ENCODE measurements at regions of chr11 and their contacts with region 1.

Region 1: DNA sequence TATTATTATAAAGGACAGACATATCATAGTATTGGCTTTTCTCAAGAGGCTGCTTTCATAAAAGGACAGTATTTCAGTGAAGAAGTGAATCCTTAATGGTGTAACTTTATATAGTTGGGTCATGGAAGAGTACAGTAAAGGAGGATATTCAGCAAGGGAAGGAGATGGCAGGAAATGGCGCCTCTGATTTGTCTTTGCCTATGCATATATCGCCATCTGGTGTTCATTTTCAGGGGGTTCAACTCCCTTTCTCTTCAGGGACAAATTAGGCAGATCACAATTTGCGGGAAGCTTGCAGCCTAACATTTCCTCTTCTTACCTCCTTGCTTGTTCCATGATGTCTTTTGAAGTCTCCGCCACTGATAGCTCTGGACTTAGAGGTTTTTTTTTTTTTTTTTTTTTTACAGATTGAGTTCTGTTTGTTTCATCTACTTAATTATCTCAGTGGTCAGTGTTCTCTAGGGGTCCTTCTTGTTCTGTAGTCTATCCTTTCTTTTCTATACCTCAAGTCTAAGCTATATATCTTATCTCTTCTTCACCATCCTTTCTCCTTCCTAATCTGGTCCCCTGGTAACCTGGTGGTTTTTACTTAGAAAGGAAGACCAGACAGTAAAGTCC is 21.8 kb upstream of the RRM1 start:
- DNase-seq: peak; percentile 63 to 76
- H3K4me3 ChIP-seq: no peak overlapping the region
- H3K4me3 Mint-ChIP-seq: no peak overlapping the region
- H3K27ac Mint-ChIP-seq: no peak overlapping the region
- H3K4me1 ChIP-seq: no peaks in the 10 kb centered on the region
- H3K4me1 Mint-ChIP-seq: no peaks in the 10 kb centered on the region
- H3K27me3 ChIP-seq: no peaks in the 10 kb centered on the region
- H3K27me3 Mint-ChIP-seq: no peaks in the 10 kb centered on the region
- CTCF ChIP-seq: peak; percentile 69 to 92

Region 2: GRCh38 chr11:3841426-3842350 is 231.1 kb before region 1 on chr11:
- CTCF ChIA-PET with region 1: interaction called, 29 read pairs
- POLR2A ChIA-PET with region 1: interaction called, 4 read pairs
- intact Hi-C with region 1: loop called (anchors 1 kb)
- DNase-seq: peak; percentile 88 to 94
- H3K4me3 ChIP-seq: peak overlapping the region; percentile 68
- H3K4me3 Mint-ChIP-seq: peak overlapping the region; percentile 96
- H3K27ac Mint-ChIP-seq: peak overlapping the region; percentile 84
- H3K4me1 ChIP-seq: peaks cover 9% of the 10 kb centered on the region; the same call in 1 of the 2 replicates
- H3K4me1 Mint-ChIP-seq: peaks cover 10% of the 10 kb centered on the region
- H3K27me3 ChIP-seq: no peaks in the 10 kb centered on the region
- H3K27me3 Mint-ChIP-seq: no peaks in the 10 kb centered on the region
- CTCF ChIP-seq: peak; percentile 77 to 95

Region 3: GRCh38 chr11:3849297-3849874 is 223.4 kb before region 1 on chr11:
- CTCF ChIA-PET with region 1: interaction called, 81 read pairs
- POLR2A ChIA-PET with region 1: no interaction called
- intact Hi-C with region 1: loop called (anchors 1 kb)
- DNase-seq: peak in 1 of 2 experiments; percentile 70
- H3K4me3 ChIP-seq: no peak overlapping the region
- H3K4me3 Mint-ChIP-seq: no peak overlapping the region
- H3K27ac Mint-ChIP-seq: no peak overlapping the region
- H3K4me1 ChIP-seq: peaks cover 7% of the 10 kb centered on the region
- H3K4me1 Mint-ChIP-seq: peaks cover 19% of the 10 kb centered on the region
- H3K27me3 ChIP-seq: no peaks in the 10 kb centered on the region
- H3K27me3 Mint-ChIP-seq: no peaks in the 10 kb centered on the region
- CTCF ChIP-seq: peak; percentile 67 to 74

Region 4: GRCh38 chr11:3920148-3920852 is 152.5 kb before region 1 on chr11:
- CTCF ChIA-PET with region 1: no interaction called
- POLR2A ChIA-PET with region 1: no interaction called
- intact Hi-C with region 1: loop called (anchors 10 kb)
- DNase-seq: no peak
- H3K4me3 ChIP-seq: no peak overlapping the region
- H3K4me3 Mint-ChIP-seq: no peak overlapping the region
- H3K27ac Mint-ChIP-seq: no peak overlapping the region
- H3K4me1 ChIP-seq: no peaks in the 10 kb centered on the region
- H3K4me1 Mint-ChIP-seq: no peaks in the 10 kb centered on the region
- H3K27me3 ChIP-seq: no peaks in the 10 kb centered on the region
- H3K27me3 Mint-ChIP-seq: no peaks in the 10 kb centered on the region
- CTCF ChIP-seq: no peak

Region 5: GRCh38 chr11:3927133-3927796 is 145.5 kb before region 1 on chr11:
- CTCF ChIA-PET with region 1: interaction called, 15 read pairs
- POLR2A ChIA-PET with region 1: no interaction called
- intact Hi-C with region 1: loop called (anchors 10 kb)
- DNase-seq: no peak
- H3K4me3 ChIP-seq: no peak overlapping the region
- H3K4me3 Mint-ChIP-seq: no peak overlapping the region
- H3K27ac Mint-ChIP-seq: no peak overlapping the region
- H3K4me1 ChIP-seq: peaks cover 7% of the 10 kb centered on the region; the same call in 1 of the 2 replicates
- H3K4me1 Mint-ChIP-seq: peaks cover 6% of the 10 kb centered on the region
- H3K27me3 ChIP-seq: no peaks in the 10 kb centered on the region
- H3K27me3 Mint-ChIP-seq: no peaks in the 10 kb centered on the region
- CTCF ChIP-seq: no peak

Region 6: DNA sequence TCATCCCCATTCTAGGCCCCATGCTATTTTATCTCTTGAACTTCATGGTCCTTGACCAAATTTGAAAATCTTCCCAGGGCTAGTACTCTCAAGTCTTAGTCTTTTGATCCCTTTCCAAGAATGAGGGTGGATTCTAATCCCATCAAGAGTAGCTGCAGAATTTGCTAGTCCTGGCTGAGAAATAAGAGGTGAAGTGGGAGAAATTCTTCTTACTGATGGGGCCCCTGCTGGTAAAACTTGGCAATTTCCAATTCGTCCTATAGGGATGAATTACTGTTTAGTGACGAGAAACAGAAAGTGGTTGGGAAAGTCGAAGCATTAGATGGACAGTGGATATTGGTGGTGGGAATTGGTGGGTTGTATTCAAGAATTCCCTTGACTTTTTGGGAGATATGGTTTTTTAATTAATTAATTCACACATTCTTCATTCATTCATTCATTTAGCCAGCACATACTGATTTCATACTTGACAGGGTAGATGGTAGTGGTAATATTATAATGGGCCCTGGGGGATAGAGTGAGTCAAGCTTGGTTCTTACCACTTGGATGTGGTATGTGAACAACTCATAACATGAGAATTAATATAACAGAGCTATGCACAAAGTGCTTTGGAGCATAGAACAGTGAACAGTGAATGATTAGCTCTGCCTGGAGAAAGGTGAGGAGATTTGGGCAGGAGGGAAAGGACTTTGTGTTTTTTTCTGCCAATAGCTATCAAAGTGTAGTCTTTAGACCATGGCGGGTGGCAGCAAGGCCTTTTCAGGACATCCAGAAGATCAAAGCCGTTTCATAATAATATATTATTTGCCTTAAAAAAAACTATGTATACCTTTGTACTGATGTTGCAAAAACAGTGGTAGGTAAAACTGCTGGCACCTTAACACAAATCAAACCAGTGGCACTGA is 113.5 kb before region 1 on chr11:
- CTCF ChIA-PET with region 1: interaction called, 3 read pairs
- POLR2A ChIA-PET with region 1: no interaction called
- intact Hi-C with region 1: loop called (anchors 10 kb)
- DNase-seq: peak in 1 of 2 experiments; percentile 40
- H3K4me3 ChIP-seq: no peak overlapping the region
- H3K4me3 Mint-ChIP-seq: no peak overlapping the region
- H3K27ac Mint-ChIP-seq: peak overlapping the region; percentile 10
- H3K4me1 ChIP-seq: peaks cover 6% of the 10 kb centered on the region; the same call in 1 of the 2 replicates
- H3K4me1 Mint-ChIP-seq: peaks cover 29% of the 10 kb centered on the region
- H3K27me3 ChIP-seq: no peaks in the 10 kb centered on the region
- H3K27me3 Mint-ChIP-seq: no peaks in the 10 kb centered on the region
- CTCF ChIP-seq: peak; percentile 45 to 57

Region 7: DNA sequence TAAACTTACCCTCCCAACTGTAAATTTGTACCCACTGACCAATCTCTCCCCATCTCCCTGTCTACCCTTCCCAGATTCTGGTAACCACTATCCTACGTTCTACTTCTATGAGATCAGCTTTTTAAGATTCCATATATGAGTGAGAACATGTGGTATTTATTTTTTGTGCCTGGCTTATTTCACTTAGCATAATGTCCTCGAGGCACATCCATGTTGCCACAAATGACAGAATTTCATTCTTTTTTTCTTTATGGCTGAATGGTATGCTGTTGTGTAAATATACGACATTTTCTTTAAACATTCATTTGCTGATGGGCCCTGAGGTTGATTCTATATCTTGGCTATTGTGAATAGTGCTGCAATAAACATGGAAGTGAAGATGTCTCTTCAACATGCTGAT is 52.9 kb before region 1 on chr11:
- CTCF ChIA-PET with region 1: no interaction called
- POLR2A ChIA-PET with region 1: no interaction called
- intact Hi-C with region 1: loop called (anchors 2 kb)
- DNase-seq: no peak
- H3K4me3 ChIP-seq: no peak overlapping the region
- H3K4me3 Mint-ChIP-seq: peak overlapping the region; percentile 1
- H3K27ac Mint-ChIP-seq: peak overlapping the region; percentile 45
- H3K4me1 ChIP-seq: peaks cover 46% of the 10 kb centered on the region
- H3K4me1 Mint-ChIP-seq: peaks cover 40% of the 10 kb centered on the region
- H3K27me3 ChIP-seq: no peaks in the 10 kb centered on the region
- H3K27me3 Mint-ChIP-seq: no peaks in the 10 kb centered on the region
- CTCF ChIP-seq: no peak

Region 8: DNA sequence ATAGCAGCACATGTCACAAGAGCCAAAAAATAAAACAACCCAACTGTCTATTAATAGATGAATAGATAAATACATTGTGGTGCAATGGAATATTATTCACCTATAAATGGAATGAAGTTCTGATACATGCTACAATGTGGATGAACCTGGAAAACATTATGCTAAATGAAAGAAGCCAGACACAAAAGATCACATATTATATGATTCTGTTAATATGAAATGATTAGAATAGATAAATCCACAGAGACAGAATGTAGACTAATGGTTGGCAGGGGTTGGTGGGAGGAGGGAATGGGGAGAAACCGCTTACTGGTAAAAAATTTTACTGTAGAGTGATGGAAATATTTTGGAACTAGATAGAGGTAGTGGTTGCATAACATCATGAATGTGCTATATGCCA is 11.1 kb before region 1 on chr11:
- CTCF ChIA-PET with region 1: no interaction called
- POLR2A ChIA-PET with region 1: no interaction called
- intact Hi-C with region 1: no loop called
- DNase-seq: no peak
- H3K4me3 ChIP-seq: no peak overlapping the region
- H3K4me3 Mint-ChIP-seq: no peak overlapping the region
- H3K27ac Mint-ChIP-seq: no peak overlapping the region
- H3K4me1 ChIP-seq: peaks cover 48% of the 10 kb centered on the region
- H3K4me1 Mint-ChIP-seq: peaks cover 51% of the 10 kb centered on the region
- H3K27me3 ChIP-seq: no peaks in the 10 kb centered on the region
- H3K27me3 Mint-ChIP-seq: no peaks in the 10 kb centered on the region
- CTCF ChIP-seq: no peak